Activated naive CD4-positive, alpha-beta T cell treated with anti-CD3 and anti-CD28 coated beads for 36 hours (primary cell): ENCODE measurements at regions of chr3 and their contacts with region 1.

Region 1: GRCh38 chr3:141738022-141738890 is at the start of gene RNF7:
- DNase-seq: peak; percentile 96
- H3K4me3 Mint-ChIP-seq: peak within 1 kb of the TSS; percentile 99
- H3K27ac Mint-ChIP-seq: peak within 1 kb of the TSS; percentile 99
- H3K4me1 Mint-ChIP-seq: peaks cover 36% of the 10 kb centered on the region
- H3K27me3 Mint-ChIP-seq: no peaks in the 10 kb centered on the region
- total RNA-seq, gene RNF7: 56.3 to 57.4 TPM

Region 2: GRCh38 chr3:141360888-141361598 is 377.2 kb before region 1 on chr3:
- CTCF ChIA-PET with region 1: no interaction called
- intact Hi-C with region 1: no loop called
- DNase-seq: no peak
- H3K4me3 Mint-ChIP-seq: no peak overlapping the region
- H3K27ac Mint-ChIP-seq: no peak overlapping the region
- H3K4me1 Mint-ChIP-seq: peaks cover 8% of the 10 kb centered on the region
- H3K27me3 Mint-ChIP-seq: no peaks in the 10 kb centered on the region

Region 3: GRCh38 chr3:141460097-141460704 is 278.1 kb before region 1 on chr3:
- CTCF ChIA-PET with region 1: interaction called, 3 read pairs
- intact Hi-C with region 1: loop called (anchors 1 kb)
- DNase-seq: peak; percentile 96
- H3K4me3 Mint-ChIP-seq: no peak overlapping the region
- H3K27ac Mint-ChIP-seq: no peak overlapping the region
- H3K4me1 Mint-ChIP-seq: peaks cover 6% of the 10 kb centered on the region
- H3K27me3 Mint-ChIP-seq: no peaks in the 10 kb centered on the region

Region 4: GRCh38 chr3:141875374-141875892 is 137.2 kb after region 1 on chr3:
- CTCF ChIA-PET with region 1: interaction called, 29 read pairs
- intact Hi-C with region 1: loop called (anchors 1 kb)
- DNase-seq: peak; percentile 90
- H3K4me3 Mint-ChIP-seq: peak overlapping the region; percentile 92
- H3K27ac Mint-ChIP-seq: peak overlapping the region; percentile 93
- H3K4me1 Mint-ChIP-seq: peaks cover 28% of the 10 kb centered on the region
- H3K27me3 Mint-ChIP-seq: no peaks in the 10 kb centered on the region

Region 5: GRCh38 chr3:142028243-142028777 is 290.1 kb after region 1 on chr3:
- CTCF ChIA-PET with region 1: interaction called, 3 read pairs
- intact Hi-C with region 1: loop called (anchors 1 kb)
- DNase-seq: peak; percentile 62
- H3K4me3 Mint-ChIP-seq: peak overlapping the region; percentile 80
- H3K27ac Mint-ChIP-seq: peak overlapping the region; percentile 73
- H3K4me1 Mint-ChIP-seq: peaks cover 24% of the 10 kb centered on the region
- H3K27me3 Mint-ChIP-seq: no peaks in the 10 kb centered on the region

Region 6: DNA sequence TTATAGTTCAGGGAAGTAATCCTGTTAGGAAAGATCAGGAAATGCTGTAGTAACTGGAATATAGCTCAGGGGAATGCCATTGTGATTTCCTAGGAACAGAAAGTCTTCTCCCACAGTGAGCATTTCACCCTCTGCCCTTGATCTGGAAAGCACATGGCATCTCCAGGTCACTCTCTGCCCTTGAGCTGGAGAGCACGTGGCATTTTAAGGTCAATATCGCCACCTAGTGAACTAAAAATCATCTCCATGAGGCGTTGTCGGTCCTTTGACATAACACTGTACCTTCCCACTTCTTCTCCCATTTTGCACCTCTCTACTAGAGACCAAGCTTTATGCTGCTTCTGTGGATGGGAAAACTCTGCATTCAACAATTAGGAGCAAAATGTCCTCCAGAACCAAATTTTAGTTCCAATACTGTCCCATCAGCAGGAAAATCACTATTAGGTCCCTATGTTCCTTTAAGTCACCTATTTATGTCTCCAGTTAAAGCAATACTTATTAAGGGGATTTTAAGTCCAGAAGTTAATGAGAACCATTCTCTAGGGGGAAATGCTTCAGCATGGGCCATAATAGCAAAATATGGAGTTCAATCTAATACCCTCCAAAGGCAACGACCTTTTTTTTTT is 541.8 kb after region 1 on chr3:
- CTCF ChIA-PET with region 1: no interaction called
- intact Hi-C with region 1: loop called (anchors 1 kb)
- DNase-seq: peak; percentile 54
- H3K4me3 Mint-ChIP-seq: no peak overlapping the region
- H3K27ac Mint-ChIP-seq: no peak overlapping the region
- H3K4me1 Mint-ChIP-seq: peaks cover 2% of the 10 kb centered on the region
- H3K27me3 Mint-ChIP-seq: no peaks in the 10 kb centered on the region